ENCODE measurements at regions of chr10 and their contacts with region 1.

Region 1: GRCh38 chr10:73650537-73651331 is 5.1 kb downstream of the SYNPO2L start:
- DNase-seq: peak; percentile 81 to 94
- ATAC-seq: peak; percentile 71 to 81 (median 78)
- H3K4me3 ChIP-seq: peak overlapping the region; percentile 73
- H3K27ac ChIP-seq: peak overlapping the region; percentile 98
- H3K4me1 ChIP-seq: peaks cover 58% of the 10 kb centered on the region
- H3K27me3 ChIP-seq: no peaks in the 10 kb centered on the region
- CTCF ChIP-seq: no peak

Region 2: DNA sequence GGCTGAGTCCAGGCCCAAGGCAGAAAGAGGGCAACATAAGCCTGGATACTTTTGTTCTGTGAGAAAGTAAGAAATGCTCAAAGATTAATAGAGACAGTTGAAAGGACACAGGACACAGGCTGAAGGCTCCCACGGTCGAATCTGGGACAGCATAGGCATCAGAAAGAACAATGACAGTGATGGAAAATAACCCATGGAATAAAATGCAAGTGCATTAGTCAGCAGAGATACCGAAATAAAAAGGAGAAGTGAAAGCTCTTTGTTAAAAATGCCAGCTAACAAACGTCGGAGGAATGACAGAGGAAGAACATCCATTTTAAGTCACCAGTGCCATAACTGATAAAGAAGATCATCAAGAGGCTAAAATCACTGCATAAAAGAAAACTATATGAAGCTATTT is 66.8 kb after region 1 on chr10:
- intact Hi-C with region 1: no loop called
- DNase-seq: no peak
- ATAC-seq: no peak
- H3K4me3 ChIP-seq: no peak overlapping the region
- H3K27ac ChIP-seq: no peak overlapping the region
- H3K4me1 ChIP-seq: no peaks in the 10 kb centered on the region
- H3K27me3 ChIP-seq: no peaks in the 10 kb centered on the region
- CTCF ChIP-seq: no peak

Region 3: GRCh38 chr10:73730153-73730906 is 79.6 kb after region 1 on chr10:
- intact Hi-C with region 1: loop called in 1 of 2 experiments (anchors 5 kb)
- DNase-seq: peak; percentile 88 to 94
- ATAC-seq: peak; percentile 90 to 95 (median 91)
- H3K4me3 ChIP-seq: peak overlapping the region; percentile 85
- H3K27ac ChIP-seq: peak overlapping the region; percentile 94
- H3K4me1 ChIP-seq: peaks cover 41% of the 10 kb centered on the region
- H3K27me3 ChIP-seq: no peaks in the 10 kb centered on the region
- CTCF ChIP-seq: no peak

Measured in psoas muscle (tissue), 8 donors.